ENCODE measurements at regions of chr4 and their contacts with region 1.

Region 1: GRCh38 chr4:163462546-163462945 is 11.0 kb downstream of the TKTL2 start:
- DNase-seq: no peak
- H3K4me3 ChIP-seq: no peak overlapping the region
- H3K27ac ChIP-seq: no peak overlapping the region
- H3K4me1 ChIP-seq: no peaks in the 10 kb centered on the region
- H3K27me3 ChIP-seq: no peaks in the 10 kb centered on the region
- CTCF ChIP-seq: no peak
- POLR2A ChIP-seq: no peak

Region 2: GRCh38 chr4:163367651-163368050 is 94.9 kb before region 1 on chr4:
- intact Hi-C with region 1: loop called (anchors 5 kb)
- DNase-seq: no peak
- H3K4me3 ChIP-seq: no peak overlapping the region
- H3K27ac ChIP-seq: no peak overlapping the region
- H3K4me1 ChIP-seq: no peaks in the 10 kb centered on the region
- H3K27me3 ChIP-seq: no peaks in the 10 kb centered on the region
- CTCF ChIP-seq: no peak
- POLR2A ChIP-seq: no peak

Region 3: DNA sequence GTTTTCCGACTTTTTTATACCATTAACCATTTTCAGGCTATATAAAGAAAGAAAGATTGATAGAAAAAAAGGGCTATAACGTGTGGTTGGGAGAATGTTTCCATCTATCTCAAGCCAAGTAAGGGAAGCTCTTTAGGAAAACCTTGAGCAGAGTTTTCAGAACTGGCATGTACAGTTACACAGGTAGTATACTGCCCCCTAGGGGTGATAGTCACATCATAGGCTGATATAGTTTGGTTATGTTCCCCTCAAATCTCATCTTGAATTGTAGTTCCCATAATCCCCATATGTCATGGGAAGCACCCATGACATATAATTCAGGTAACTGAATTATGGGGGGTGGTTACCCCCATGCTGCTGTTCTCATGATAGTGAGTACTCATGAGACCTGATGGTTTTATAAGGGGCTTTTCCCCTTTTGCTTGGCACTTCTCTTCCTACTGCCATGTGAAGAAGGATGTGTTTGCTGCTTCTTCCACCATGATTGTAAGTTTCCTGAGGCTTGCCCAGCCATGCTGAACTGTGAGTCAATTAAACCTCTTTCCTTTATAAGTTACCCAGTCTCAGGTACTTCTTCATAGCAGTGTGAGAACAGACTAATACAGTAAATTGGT is 218.8 kb after region 1 on chr4:
- intact Hi-C with region 1: no loop called
- DNase-seq: no peak
- H3K4me3 ChIP-seq: no peak overlapping the region
- H3K27ac ChIP-seq: no peak overlapping the region
- H3K4me1 ChIP-seq: no peaks in the 10 kb centered on the region
- H3K27me3 ChIP-seq: no peaks in the 10 kb centered on the region
- CTCF ChIP-seq: no peak
- POLR2A ChIP-seq: no peak